ENCODE measurements at regions of chr9 and their contacts with region 1.

Region 1: GRCh38 chr9:33816327-33817252 is at the start of gene UBE2R2:
- DNase-seq: peak; percentile 83 to 96 (median 92)
- H3K4me3 ChIP-seq: peak within 1 kb of the TSS; percentile 67 to 97 (median 89)
- H3K27ac ChIP-seq: peak within 1 kb of the TSS; percentile 90 to 100 (median 99)
- H3K27me3 ChIP-seq: no peaks in the 10 kb centered on the region
- CTCF ChIP-seq: peak in 35 of 56 donors; percentile 7 to 56 (median 25)
- total RNA-seq, gene UBE2R2: 31.7 to 50.3 (median 42.2) TPM

Region 2: GRCh38 chr9:33852216-33852826 is 35.7 kb after region 1 on chr9:
- intact Hi-C with region 1: loop called (anchors 1 to 2 kb)
- DNase-seq: peak; percentile 53 to 89 (median 66)
- H3K4me3 ChIP-seq: peak overlapping the region in 2 of 59 donors; percentile 16 to 18
- H3K27ac ChIP-seq: peak overlapping the region in 58 of 59 donors; percentile 7 to 90 (median 74)
- H3K27me3 ChIP-seq: no peaks in the 10 kb centered on the region
- CTCF ChIP-seq: peak; percentile 42 to 88 (median 74)

Region 3: GRCh38 chr9:33924978-33925797 is 108.6 kb after region 1 on chr9:
- intact Hi-C with region 1: loop called (anchors 5 to 10 kb)
- DNase-seq: peak in 8 of 10 donors; percentile 57 to 82 (median 66)
- H3K4me3 ChIP-seq: no peak overlapping the region
- H3K27ac ChIP-seq: peak overlapping the region in 58 of 59 donors; percentile 16 to 89 (median 75)
- H3K27me3 ChIP-seq: no peaks in the 10 kb centered on the region
- CTCF ChIP-seq: peak; percentile 30 to 81 (median 68)

Region 4: GRCh38 chr9:34048923-34049697 is 232.5 kb after region 1 on chr9:
- intact Hi-C with region 1: loop called in 1 of 2 experiments (anchors 10 kb)
- DNase-seq: peak; percentile 98 to 99 (median 98)
- H3K4me3 ChIP-seq: peak overlapping the region; percentile 71 to 100 (median 98)
- H3K27ac ChIP-seq: peak overlapping the region; percentile 67 to 100 (median 97)
- H3K27me3 ChIP-seq: no peaks in the 10 kb centered on the region
- CTCF ChIP-seq: peak in 36 of 56 donors; percentile 7 to 62 (median 25)

Region 5: DNA sequence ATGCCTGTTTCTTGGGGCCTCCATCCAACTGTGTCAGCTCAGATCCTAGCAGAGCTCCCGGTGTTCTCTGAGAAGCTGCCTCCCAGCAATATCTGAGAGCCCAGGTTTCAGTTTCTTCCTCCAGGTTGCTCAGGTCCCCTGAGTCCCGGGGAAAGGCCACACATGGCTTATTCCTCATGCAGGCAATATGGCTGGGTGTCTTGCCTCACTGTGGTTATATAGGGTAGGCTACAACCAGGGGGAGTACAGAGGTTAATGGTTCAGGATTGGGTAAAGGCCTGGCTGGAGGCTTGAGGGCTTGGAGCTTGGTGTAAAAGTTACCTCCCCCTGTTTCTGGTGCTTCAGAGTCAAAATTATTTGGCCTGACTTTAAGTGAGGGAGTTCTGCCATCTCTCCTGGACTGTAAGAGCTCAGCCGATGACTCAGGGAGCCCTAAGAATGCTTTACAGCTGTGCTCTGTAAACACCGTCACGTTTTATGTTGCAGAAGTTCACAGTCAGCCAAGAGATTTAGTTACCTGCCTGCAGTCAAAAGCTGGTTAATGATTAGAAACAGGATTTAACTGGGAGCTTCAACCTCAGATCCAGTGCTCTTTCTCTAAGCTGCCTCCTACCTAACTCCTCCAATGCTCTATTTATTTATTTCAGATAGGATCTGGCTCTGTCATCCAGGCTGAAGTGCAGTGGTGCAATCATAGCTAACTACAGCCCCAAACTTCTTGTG is 256.4 kb after region 1 on chr9:
- intact Hi-C with region 1: loop called in 1 of 2 experiments (anchors 10 kb)
- DNase-seq: no peak
- H3K4me3 ChIP-seq: no peak overlapping the region
- H3K27ac ChIP-seq: no peak overlapping the region
- H3K27me3 ChIP-seq: no peaks in the 10 kb centered on the region
- CTCF ChIP-seq: no peak